ENCODE measurements at regions of chr12 and their contacts with region 1.

Region 1: DNA sequence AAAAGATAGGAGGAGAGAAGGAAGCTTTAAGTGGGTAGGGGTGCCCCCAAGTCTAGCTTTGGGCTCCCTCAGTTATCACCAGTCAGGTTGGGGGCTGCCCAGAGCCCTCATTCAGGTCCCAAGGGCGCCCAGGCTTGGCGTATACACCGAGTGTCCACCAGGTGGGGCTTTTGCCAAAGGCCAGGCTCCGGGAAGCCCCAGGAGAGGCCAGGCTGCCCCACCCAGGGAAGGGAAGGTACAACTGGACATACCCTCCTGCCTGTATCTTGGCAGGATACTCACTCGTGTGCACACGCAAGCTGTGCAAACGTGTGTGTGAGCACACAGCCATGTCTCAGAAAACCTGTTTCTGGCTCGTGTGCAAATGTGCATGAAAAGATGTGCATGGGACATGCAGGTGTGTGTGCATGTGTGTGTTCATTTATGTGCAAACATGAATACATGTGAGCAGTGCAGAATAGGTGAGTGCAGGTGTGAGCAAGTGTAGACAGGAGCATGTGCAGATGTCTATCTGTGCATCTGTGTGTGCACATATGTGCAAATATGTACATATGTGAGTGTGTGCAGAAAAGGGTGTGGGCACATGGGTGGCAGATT is 103.9 kb upstream of the MYL2 start:
- DNase-seq: peak in 3 of 4 donors; percentile 24 to 85 (median 44)
- ATAC-seq: peak; percentile 93
- H3K4me3 ChIP-seq: no peak overlapping the region
- H3K27ac ChIP-seq: no peak overlapping the region
- H3K4me1 ChIP-seq: no peaks in the 10 kb centered on the region
- H3K27me3 ChIP-seq: peaks cover 0 to 84% of the 10 kb centered on the region in 2 donors
- CTCF ChIP-seq: peak; percentile 65 to 67

Region 2: DNA sequence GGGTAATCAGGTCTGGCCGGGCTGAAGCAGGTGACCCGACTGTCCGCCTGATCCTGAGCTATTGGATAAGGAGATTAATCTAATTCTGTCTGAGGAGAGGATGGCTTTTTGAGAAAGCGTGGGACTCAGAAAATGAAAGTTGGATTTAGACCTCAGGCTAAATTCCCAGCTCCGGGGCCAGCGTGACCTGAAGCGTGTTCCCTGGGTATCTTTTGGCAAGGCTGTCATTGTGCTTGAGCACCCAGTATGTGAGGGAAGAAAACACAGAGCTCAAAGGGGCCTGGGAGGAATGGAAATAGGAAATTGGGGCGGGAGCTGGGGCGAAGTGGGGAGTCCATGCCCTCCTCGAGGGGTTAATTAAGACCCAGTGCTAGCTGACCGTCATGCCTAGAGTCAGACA is 195.0 kb before region 1 on chr12:
- intact Hi-C with region 1: no loop called
- DNase-seq: no peak
- ATAC-seq: no peak
- H3K4me3 ChIP-seq: no peak overlapping the region
- H3K27ac ChIP-seq: no peak overlapping the region
- H3K4me1 ChIP-seq: peaks cover 3 to 4% of the 10 kb centered on the region in 2 donors
- H3K27me3 ChIP-seq: peaks cover 0 to 31% of the 10 kb centered on the region in 2 donors
- CTCF ChIP-seq: no peak

Region 3: GRCh38 chr12:111274777-111275176 is 250.5 kb after region 1 on chr12:
- intact Hi-C with region 1: loop called in 1 of 2 experiments (anchors 10 kb)
- DNase-seq: no peak
- ATAC-seq: no peak
- H3K4me3 ChIP-seq: no peak overlapping the region
- H3K27ac ChIP-seq: no peak overlapping the region
- H3K4me1 ChIP-seq: no peaks in the 10 kb centered on the region
- H3K27me3 ChIP-seq: peaks cover 0 to 60% of the 10 kb centered on the region in 2 donors
- CTCF ChIP-seq: peak in 1 of 2 donors; percentile 15